Ovary (tissue), 10 donors: ENCODE measurements at regions of chr1 and their contacts with region 1.

Region 1: GRCh38 chr1:40840526-40841323 is 21.4 kb downstream of the CITED4 start:
- DNase-seq: no peak
- H3K4me3 ChIP-seq: no peak overlapping the region
- H3K27ac ChIP-seq: no peak overlapping the region
- H3K4me1 ChIP-seq: no peaks in the 10 kb centered on the region
- H3K27me3 ChIP-seq: no peaks in the 10 kb centered on the region
- CTCF ChIP-seq: no peak
- EP300 ChIP-seq: no peak
- POLR2A ChIP-seq: no peak

Region 2: DNA sequence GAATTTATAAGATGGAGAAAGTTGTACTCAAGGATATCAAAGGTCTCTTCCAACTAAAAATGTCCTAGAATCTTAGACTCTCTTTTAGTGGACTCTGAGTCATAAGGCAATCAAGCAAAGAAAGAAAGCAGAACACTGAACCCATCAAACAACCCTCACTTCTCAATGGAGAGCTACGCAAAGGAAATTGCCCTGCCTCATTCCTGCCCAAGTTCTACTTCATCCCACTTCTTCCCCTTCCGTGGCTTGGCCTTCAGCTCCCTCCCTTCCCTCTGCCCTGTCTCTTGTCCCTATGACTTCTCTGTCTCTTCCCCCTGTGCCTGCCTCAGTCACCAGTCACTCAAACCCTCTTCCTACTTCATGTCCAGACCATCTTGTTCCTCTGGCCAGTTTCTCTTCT is 233.7 kb before region 1 on chr1:
- intact Hi-C with region 1: loop called in 2 of 4 experiments (anchors 5 to 10 kb)
- DNase-seq: no peak
- H3K4me3 ChIP-seq: no peak overlapping the region
- H3K27ac ChIP-seq: no peak overlapping the region
- H3K4me1 ChIP-seq: no peaks in the 10 kb centered on the region
- H3K27me3 ChIP-seq: no peaks in the 10 kb centered on the region
- CTCF ChIP-seq: no peak
- EP300 ChIP-seq: no peak
- POLR2A ChIP-seq: no peak

Region 3: GRCh38 chr1:40612345-40612831 is 228.3 kb before region 1 on chr1:
- intact Hi-C with region 1: loop called in 2 of 4 experiments (anchors 5 to 10 kb)
- DNase-seq: peak in 4 of 5 donors; percentile 25 to 49 (median 36)
- H3K4me3 ChIP-seq: no peak overlapping the region
- H3K27ac ChIP-seq: no peak overlapping the region
- H3K4me1 ChIP-seq: no peaks in the 10 kb centered on the region
- H3K27me3 ChIP-seq: no peaks in the 10 kb centered on the region
- CTCF ChIP-seq: peak; percentile 28 to 30 (median 28)
- EP300 ChIP-seq: no peak
- POLR2A ChIP-seq: no peak

Region 4: DNA sequence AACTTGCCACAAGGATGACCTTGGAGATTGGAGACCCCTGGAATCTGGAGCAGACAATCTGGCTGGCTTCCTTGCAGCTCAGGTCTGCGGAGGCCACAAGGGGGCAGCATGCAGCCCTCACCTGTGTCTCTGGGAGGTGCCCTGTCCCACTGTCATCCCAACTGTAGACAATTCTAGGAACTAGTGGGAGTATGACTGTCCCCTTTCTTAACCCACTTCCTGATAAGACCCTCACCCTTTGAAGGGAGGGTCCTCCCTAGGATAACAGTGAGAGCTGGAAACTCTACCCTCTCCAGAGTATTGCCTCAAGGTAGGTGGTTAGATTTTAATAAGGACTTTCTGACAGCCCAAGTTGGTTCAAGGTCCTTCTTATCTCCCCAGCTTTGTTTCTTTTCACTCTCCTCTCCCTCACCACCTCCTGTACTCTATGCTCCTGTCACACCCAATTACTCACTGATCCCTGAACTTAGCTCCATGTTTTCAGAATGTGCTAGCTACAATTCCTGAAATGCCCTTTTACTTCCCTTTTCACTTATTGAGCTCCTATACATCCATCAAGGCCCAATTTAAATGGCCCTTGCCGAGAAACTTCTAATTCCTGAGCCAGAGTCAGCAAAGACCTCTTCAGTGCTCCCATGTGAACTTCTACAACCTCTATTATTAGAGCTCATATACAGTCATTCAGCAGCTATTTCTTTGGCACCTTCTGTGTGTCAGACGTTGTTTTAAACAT is 66.3 kb before region 1 on chr1:
- intact Hi-C with region 1: loop called in 2 of 4 experiments (anchors 2 to 10 kb)
- DNase-seq: peak; percentile 30 to 64 (median 55)
- H3K4me3 ChIP-seq: no peak overlapping the region
- H3K27ac ChIP-seq: no peak overlapping the region
- H3K4me1 ChIP-seq: no peaks in the 10 kb centered on the region
- H3K27me3 ChIP-seq: no peaks in the 10 kb centered on the region
- CTCF ChIP-seq: peak in 2 of 3 donors; percentile 33 to 41
- EP300 ChIP-seq: no peak
- POLR2A ChIP-seq: no peak

Region 5: GRCh38 chr1:40802078-40802741 is 38.5 kb before region 1 on chr1:
- intact Hi-C with region 1: no loop called
- DNase-seq: peak; percentile 87 to 93 (median 90)
- H3K4me3 ChIP-seq: peak overlapping the region; percentile 41
- H3K27ac ChIP-seq: peak overlapping the region; percentile 80 to 81
- H3K4me1 ChIP-seq: peaks cover 16% of the 10 kb centered on the region
- H3K27me3 ChIP-seq: no peaks in the 10 kb centered on the region
- CTCF ChIP-seq: no peak
- EP300 ChIP-seq: no peak
- POLR2A ChIP-seq: no peak